K562 (cell line): ENCODE measurements at regions of chr2 and their contacts with region 1.

Region 1: DNA sequence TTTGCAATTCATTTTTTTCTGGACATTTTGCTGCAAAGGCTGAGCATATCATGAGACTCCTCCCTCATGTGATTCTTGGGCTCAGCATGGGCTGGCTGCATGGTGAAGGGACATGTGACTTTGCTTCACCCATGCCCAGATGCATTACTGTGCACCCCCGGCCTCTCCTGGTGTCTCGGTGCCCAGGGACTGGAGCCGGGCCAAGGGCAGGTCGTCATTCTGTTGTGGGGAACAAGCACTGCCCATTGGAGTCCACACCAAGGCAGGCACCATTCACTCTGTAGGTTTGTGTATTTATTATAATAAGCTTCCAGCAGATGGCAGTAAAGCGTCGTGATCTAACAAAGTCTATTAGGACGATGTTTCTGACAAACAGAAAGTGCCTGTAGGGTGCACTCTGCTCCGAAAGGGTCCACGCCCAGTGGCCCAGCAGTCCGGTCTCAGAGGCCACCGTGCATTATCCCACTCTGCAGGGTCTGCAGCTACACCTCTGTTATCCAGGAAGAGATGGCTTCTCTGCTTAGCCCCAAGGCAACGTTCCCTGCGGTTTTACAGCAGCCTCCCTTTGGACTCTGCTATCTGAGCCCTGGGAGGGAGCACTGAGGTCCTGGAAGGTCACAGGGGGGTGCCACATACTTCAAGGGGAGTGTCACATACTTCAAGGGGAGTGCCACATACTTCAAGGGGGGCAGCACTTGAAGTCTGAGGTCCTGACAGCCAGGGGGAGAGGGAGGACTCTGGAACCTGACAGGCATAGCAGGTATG is 219.6 kb downstream of the TSN start:
- DNase-seq: peak; percentile 65 to 85 (median 68)
- ATAC-seq: peak; percentile 99
- H3K4me3 ChIP-seq: no peak overlapping the region
- H3K27ac ChIP-seq: no peak overlapping the region
- H3K4me1 ChIP-seq: no peaks in the 10 kb centered on the region
- H3K27me3 ChIP-seq: no peaks in the 10 kb centered on the region; a peak in 1 of 5 replicates
- CTCF ChIP-seq: peak; percentile 69 to 94 (median 87)
- EP300 ChIP-seq: no peak
- POLR2A ChIP-seq: no peak
- RAD21 ChIP-seq: peak; percentile 85

Region 2: DNA sequence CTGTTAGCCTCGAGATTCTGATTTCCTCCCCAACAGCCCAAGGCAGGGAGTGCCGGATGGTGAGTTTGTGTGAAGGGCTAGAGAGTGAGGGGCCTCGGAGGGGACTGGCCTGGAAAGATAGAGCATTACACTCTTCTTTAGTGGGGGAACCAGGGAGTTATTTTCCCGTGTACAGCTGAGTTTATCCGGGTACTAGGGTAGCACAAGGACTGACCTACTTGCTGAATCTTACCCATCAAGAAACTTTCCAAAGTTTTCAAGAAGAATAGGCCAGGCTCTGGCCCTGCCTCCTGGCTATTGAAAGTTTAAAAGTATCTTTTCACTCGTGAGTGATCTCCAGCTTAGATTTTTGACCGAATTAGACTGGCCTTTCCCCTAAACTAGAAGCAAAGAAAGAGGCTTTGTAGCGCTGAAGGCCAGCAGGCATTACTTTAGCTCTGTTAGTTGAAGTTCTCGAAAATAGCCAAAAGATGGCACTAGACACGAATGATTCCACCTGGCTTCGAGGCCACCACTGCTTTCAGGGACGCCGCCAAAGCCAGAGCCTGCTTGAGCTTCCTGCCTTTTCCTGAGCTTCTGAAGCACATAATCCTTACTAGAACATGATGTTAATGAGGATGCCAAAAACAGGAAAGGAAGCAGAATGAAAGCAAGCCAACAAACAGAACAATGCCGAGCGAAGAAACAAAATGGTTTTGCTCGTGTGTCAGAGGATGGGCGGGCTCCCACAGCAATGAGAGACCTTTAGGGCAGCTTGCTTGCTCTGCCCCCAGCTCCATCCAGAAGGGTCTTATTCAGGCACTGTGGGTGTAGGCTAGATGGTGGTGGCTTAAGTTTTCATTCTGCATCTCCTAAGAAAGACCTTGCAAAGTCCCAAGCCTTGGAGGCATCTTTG is 163.9 kb before region 1 on chr2:
- CTCF ChIA-PET with region 1: interaction called, 3 read pairs
- POLR2A ChIA-PET with region 1: no interaction called
- in situ Hi-C with region 1: no loop called
- intact Hi-C with region 1: loop called (anchors 5 kb)
- DNase-seq: peak; percentile 21 to 64 (median 34)
- ATAC-seq: peak; percentile 97
- H3K4me3 ChIP-seq: no peak overlapping the region
- H3K27ac ChIP-seq: no peak overlapping the region
- H3K4me1 ChIP-seq: no peaks in the 10 kb centered on the region; a peak in 1 of 5 replicates
- H3K27me3 ChIP-seq: peaks cover 11 to 41% of the 10 kb centered on the region in 2 experiments; a peak in 4 of 5 replicates
- CTCF ChIP-seq: peak; percentile 67 to 72 (median 70)
- EP300 ChIP-seq: no peak
- POLR2A ChIP-seq: no peak
- RAD21 ChIP-seq: peak; percentile 73 to 82

Region 3: DNA sequence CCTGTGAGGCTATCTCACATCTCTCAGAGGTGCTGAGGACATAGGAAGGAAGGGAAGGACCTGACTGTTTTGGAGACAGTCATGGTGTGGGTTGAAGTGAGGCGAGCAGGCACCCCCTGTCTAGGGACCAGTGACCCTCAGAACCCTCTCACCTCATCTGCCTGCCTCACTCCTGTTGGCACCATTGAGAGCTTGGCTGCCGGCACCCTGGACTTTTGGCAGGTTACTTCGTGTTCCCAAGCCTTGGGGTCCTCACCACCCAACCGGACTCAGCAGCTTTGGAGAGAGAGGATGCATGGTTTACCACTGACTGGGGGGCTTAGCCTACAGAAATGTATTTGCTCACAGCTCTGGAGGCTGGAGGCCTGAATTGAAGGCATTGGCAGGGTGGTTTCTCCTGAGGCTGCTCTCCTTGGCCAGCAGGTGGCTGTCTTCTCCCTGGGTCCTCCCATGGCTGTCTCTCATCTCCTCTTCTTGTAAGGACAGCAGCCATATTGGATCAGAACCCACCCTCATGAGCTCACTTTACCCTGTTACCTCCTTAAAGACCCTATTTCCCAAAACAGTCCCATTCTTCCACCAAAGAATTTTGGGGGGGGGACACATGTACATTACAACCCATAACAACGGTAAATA is 77.6 kb before region 1 on chr2:
- CTCF ChIA-PET with region 1: no interaction called
- POLR2A ChIA-PET with region 1: no interaction called
- in situ Hi-C with region 1: no loop called
- intact Hi-C with region 1: loop called (anchors 5 kb)
- DNase-seq: peak; percentile 63 to 69 (median 66)
- ATAC-seq: peak; percentile 89
- H3K4me3 ChIP-seq: no peak overlapping the region
- H3K27ac ChIP-seq: no peak overlapping the region
- H3K4me1 ChIP-seq: peaks cover 17% of the 10 kb centered on the region in 2 experiments; a peak in 4 of 5 replicates
- H3K27me3 ChIP-seq: peaks cover 0 to 8% of the 10 kb centered on the region in 2 experiments; a peak in 2 of 5 replicates
- CTCF ChIP-seq: peak; percentile 69 to 73 (median 71)
- EP300 ChIP-seq: no peak
- POLR2A ChIP-seq: no peak
- RAD21 ChIP-seq: peak; percentile 30 to 58; a peak in 3 of 4 replicates

Region 4: GRCh38 chr2:122009561-122009960 is 34.5 kb after region 1 on chr2:
- CTCF ChIA-PET with region 1: no interaction called
- POLR2A ChIA-PET with region 1: no interaction called
- in situ Hi-C with region 1: no loop called
- intact Hi-C with region 1: no loop called
- DNase-seq: no peak
- ATAC-seq: no peak
- H3K4me3 ChIP-seq: no peak overlapping the region
- H3K27ac ChIP-seq: no peak overlapping the region
- H3K4me1 ChIP-seq: no peaks in the 10 kb centered on the region
- H3K27me3 ChIP-seq: peaks cover 3 to 22% of the 10 kb centered on the region in 2 experiments; a peak in 4 of 5 replicates
- CTCF ChIP-seq: no peak
- EP300 ChIP-seq: no peak
- POLR2A ChIP-seq: no peak
- RAD21 ChIP-seq: no peak

Region 5: DNA sequence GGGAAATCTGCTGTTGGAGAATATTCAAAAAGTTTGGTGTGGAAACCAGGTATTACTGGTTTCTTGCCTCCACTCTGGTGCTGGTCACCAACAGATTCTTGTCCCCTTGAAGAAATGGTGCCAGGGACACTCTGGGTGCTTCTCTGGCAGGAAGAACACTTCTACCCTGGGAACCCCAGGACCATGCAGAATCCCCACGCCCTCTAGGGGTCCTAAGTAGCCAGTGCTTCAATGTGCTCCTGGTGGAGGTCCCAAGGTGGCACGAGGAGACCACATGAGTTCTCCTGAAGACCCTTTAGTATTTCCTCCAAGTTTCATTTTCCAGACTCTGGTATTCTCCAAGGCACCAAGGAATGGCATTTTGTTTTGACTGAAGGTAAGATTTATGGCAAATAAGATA is 161.0 kb after region 1 on chr2:
- CTCF ChIA-PET with region 1: interaction called, 3 read pairs
- POLR2A ChIA-PET with region 1: no interaction called
- in situ Hi-C with region 1: no loop called
- intact Hi-C with region 1: loop called (anchors 5 kb)
- DNase-seq: peak; percentile 26 to 48 (median 42)
- ATAC-seq: peak; percentile 88
- H3K4me3 ChIP-seq: no peak overlapping the region
- H3K27ac ChIP-seq: no peak overlapping the region
- H3K4me1 ChIP-seq: peaks cover 0 to 8% of the 10 kb centered on the region in 2 experiments; a peak in 2 of 5 replicates
- H3K27me3 ChIP-seq: no peaks in the 10 kb centered on the region
- CTCF ChIP-seq: peak; percentile 50 to 63 (median 62); a peak in 5 of 6 replicates
- EP300 ChIP-seq: no peak
- POLR2A ChIP-seq: no peak
- RAD21 ChIP-seq: peak in 1 of 2 experiments; percentile 27; a peak in 2 of 4 replicates

Region 6: DNA sequence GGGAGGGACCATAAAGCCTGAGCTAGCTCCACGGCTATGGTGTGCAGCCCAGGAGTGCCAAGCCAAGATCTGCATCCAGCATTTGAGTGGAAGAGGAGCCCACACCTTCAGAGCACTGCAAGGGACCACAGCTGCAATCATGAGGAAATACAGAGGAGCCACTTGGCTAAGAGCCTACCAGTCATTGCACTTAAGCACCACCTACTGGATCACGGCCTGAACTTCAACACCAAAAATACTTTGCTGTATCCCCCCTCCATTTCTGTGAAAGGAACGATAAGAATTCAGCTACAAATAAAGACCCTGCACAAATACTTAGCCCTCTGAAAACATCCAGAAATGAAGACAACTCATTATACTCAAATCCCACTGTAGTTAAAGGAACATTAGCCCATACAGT is 325.7 kb after region 1 on chr2:
- CTCF ChIA-PET with region 1: interaction called, 4 read pairs
- POLR2A ChIA-PET with region 1: no interaction called
- in situ Hi-C with region 1: no loop called
- intact Hi-C with region 1: loop called (anchors 1 kb)
- DNase-seq: peak in 2 of 4 experiments; percentile 11 to 34
- ATAC-seq: peak; percentile 72
- H3K4me3 ChIP-seq: no peak overlapping the region
- H3K27ac ChIP-seq: no peak overlapping the region
- H3K4me1 ChIP-seq: no peaks in the 10 kb centered on the region
- H3K27me3 ChIP-seq: no peaks in the 10 kb centered on the region
- CTCF ChIP-seq: peak; percentile 20 to 49 (median 36); a peak in 3 of 6 replicates
- EP300 ChIP-seq: no peak
- POLR2A ChIP-seq: no peak
- RAD21 ChIP-seq: peak in 1 of 2 experiments; percentile 49; a peak in 2 of 4 replicates

Region 7: GRCh38 chr2:122451040-122451439 is 476.0 kb after region 1 on chr2:
- CTCF ChIA-PET with region 1: interaction called, 7 read pairs
- POLR2A ChIA-PET with region 1: no interaction called
- in situ Hi-C with region 1: loop called (anchors 25 kb)
- intact Hi-C with region 1: loop called (anchors 1 kb)
- DNase-seq: peak in 3 of 4 experiments; percentile 9 to 14 (median 13)
- ATAC-seq: no peak
- H3K4me3 ChIP-seq: no peak overlapping the region
- H3K27ac ChIP-seq: no peak overlapping the region
- H3K4me1 ChIP-seq: no peaks in the 10 kb centered on the region
- H3K27me3 ChIP-seq: no peaks in the 10 kb centered on the region
- CTCF ChIP-seq: peak; percentile 36 to 56 (median 56)
- EP300 ChIP-seq: no peak
- POLR2A ChIP-seq: no peak
- RAD21 ChIP-seq: peak; percentile 52 to 60